Transverse colon (tissue), 4 donors: ENCODE measurements at regions of chr20 and their contacts with region 1.

Region 1: DNA sequence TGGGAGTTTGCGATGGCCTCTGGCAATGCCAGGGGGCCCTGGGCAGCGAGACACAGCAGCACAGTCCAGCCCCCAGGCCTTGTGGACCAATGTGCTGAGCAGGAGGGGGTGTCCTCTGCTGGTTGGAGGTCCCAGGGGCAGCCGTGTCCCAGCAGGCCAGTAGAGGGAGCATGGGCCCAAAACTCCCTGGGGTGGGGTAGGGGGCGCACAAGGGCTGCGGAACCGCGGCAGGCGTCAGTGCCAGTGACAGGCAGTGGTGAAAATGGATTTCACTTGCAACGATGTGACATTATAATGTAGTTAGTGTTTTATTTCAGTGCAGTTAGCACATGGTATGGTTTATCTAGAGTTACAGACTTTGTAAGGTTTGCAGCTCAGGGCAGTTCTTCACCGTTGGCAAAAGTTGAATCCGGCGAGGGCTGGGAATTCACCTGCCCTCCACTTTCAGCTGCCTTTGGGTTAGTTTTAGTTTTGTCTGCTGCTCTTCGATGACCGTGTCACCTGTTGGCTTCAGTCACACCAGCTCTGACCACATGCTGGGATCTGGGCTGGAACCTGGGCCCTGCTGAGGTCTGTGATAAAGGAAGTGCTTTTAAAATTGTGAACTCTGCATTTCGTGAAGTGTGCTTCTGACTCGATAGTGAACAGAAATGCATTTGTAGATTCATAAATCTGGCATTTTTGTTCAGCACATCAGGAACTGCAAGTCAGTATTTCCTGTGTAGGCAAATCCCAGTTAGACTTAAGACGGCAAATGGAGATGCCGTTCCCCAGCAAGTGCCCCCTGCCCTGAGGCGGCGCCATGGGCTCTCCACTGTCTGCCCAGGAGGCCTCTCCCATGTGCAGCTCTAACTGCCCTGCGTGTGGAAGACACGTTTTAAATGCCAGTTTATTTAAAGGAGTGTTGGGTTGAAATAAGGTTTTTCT is 46.8 kb downstream of the PYGB start:
- DNase-seq: peak; percentile 52
- H3K4me3 ChIP-seq: no peak overlapping the region
- H3K27ac ChIP-seq: peak overlapping the region; percentile 30 to 68 (median 65)
- H3K4me1 ChIP-seq: peaks cover 9 to 26% (median 22%) of the 10 kb centered on the region in 4 donors
- H3K27me3 ChIP-seq: no peaks in the 10 kb centered on the region
- CTCF ChIP-seq: peak; percentile 53 to 68 (median 63)
- EP300 ChIP-seq: no peak
- POLR2A ChIP-seq: no peak

Region 2: DNA sequence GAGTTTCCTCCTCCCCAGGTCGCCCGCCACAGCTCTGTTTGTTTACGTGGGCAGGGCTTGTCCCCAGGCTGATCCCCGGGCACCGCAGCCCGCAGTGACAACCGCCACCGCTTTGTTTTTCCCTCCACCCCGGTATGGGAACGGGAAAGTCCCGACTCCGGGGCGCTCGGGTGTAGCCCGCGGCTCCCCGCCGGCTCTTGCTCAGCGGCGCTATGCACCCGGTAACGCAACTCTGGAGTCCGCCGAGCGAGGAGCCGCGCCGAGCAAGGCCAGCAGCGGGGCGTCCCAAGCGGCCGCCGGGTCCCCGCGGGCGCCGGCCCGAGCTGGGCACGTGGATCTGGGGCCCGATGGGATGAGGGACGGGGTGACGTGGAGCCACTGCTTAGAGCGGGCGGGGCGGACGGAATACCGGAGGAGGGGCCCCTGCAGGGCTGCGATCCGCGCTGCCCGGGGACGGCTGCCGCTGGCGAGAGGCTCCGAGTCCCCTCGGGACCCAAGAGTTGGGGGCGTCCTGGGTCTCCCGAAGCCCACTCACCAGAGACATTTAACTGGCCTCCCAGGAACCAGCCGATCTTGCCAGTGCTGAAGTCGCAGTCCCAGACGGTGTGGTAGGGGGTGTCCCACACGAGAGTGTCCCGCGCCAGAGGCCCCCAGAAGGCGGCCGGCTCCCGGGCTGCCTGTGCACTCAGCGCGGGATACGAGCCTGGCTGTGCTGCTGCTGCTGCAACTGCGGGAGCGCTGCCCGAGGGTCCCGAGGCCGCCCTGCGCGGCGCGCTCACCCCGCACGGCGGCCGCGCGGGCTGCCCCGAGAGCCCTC is 237.3 kb before region 1 on chr20:
- in situ Hi-C with region 1: no loop called
- intact Hi-C with region 1: loop called (anchors 5 kb)
- DNase-seq: peak; percentile 85
- H3K4me3 ChIP-seq: peak overlapping the region; percentile 39 to 85 (median 80)
- H3K27ac ChIP-seq: peak overlapping the region; percentile 92 to 98 (median 96)
- H3K4me1 ChIP-seq: peaks cover 23 to 61% (median 48%) of the 10 kb centered on the region in 4 donors
- H3K27me3 ChIP-seq: no peaks in the 10 kb centered on the region
- CTCF ChIP-seq: peak in 4 of 5 experiments; percentile 2 to 48 (median 12)
- EP300 ChIP-seq: no peak
- POLR2A ChIP-seq: peak; percentile 82

Region 3: DNA sequence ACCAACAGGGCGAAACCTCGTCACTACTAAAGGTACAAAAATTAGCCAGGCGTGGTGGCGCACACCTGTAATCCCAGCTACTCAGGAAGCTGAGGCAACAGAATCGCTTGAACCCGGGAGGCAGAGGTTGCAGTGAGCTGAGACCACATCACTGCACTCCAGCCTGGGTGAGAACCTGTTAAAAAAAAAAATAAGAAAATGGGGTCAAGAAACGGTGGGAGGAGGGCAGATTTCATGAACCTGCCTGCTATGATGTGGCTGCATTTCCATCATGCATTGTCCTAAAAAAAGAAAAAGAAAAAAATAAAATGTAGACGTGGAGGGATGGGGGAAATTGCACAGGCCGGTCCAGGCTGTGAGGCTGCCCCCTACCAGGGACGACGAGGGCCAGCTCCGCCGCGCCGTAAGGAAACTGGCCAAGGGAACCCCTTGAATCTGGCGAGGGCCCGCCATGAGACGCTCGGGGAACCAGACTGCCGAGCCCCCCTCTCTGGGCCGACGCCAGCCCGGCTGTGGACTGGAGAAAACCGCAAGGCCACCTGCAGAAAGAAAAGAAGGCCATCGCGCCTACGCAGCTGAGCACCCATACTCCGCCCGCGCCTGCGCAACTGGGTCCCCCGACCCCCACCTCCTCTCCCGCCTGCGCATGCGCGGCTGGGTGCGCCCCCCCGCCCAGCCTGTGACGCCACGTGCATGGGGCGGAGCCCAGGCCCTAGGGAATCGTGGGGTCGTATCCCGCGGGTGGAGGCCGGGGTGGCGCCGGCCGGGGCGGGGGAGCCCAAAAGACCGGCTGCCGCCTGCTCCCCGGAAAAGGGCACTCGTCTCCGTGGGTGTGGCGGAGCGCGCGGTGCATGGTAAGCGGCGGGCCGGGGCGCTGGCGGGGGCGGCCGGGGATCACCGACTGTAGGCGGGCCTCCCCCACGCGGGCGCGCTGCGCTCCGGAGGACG is 99.4 kb before region 1 on chr20 and contains the start of gene ENTPD6:
- in situ Hi-C with region 1: loop called in 1 of 4 experiments (anchors 25 kb)
- intact Hi-C with region 1: no loop called
- DNase-seq: peak; percentile 96
- H3K4me3 ChIP-seq: peak within 1 kb of the TSS; percentile 64 to 98 (median 80)
- H3K27ac ChIP-seq: peak within 1 kb of the TSS; percentile 84 to 94 (median 91)
- H3K4me1 ChIP-seq: peaks cover 22 to 44% (median 34%) of the 10 kb centered on the region in 4 donors
- H3K27me3 ChIP-seq: no peaks in the 10 kb centered on the region
- CTCF ChIP-seq: peak in 4 of 5 experiments; percentile 4 to 28 (median 10)
- EP300 ChIP-seq: no peak
- POLR2A ChIP-seq: peak; percentile 76
- total RNA-seq, gene ENTPD6: 163 to 261 (median 224) TPM

Region 4: GRCh38 chr20:25390538-25391528 is 96.1 kb after region 1 on chr20 and contains the start of gene ABHD12:
- in situ Hi-C with region 1: loop called in 1 of 4 experiments (anchors 10 kb)
- intact Hi-C with region 1: no loop called
- DNase-seq: peak; percentile 98
- H3K4me3 ChIP-seq: peak within 1 kb of the TSS; percentile 71 to 94 (median 74)
- H3K27ac ChIP-seq: peak within 1 kb of the TSS; percentile 94 to 98 (median 94)
- H3K4me1 ChIP-seq: peaks cover 3 to 15% (median 11%) of the 10 kb centered on the region in 4 donors
- H3K27me3 ChIP-seq: no peaks in the 10 kb centered on the region
- CTCF ChIP-seq: no peak
- EP300 ChIP-seq: no peak
- POLR2A ChIP-seq: peak; percentile 91
- total RNA-seq, gene ABHD12: 67.3 to 103 (median 73.4) TPM